ENCODE measurements at regions of chr20 and their contacts with region 1.

Region 1: GRCh38 chr20:34312544-34313217 is 9.5 kb upstream of the AHCY start:
- DNase-seq: peak; percentile 32 to 90
- H3K4me3 ChIP-seq: peak overlapping the region in 1 of 2 donors; percentile 43
- H3K27ac ChIP-seq: no peak overlapping the region
- H3K4me1 ChIP-seq: peaks cover 14 to 16% of the 10 kb centered on the region in 2 donors
- H3K27me3 ChIP-seq: no peaks in the 10 kb centered on the region
- CTCF ChIP-seq: peak; percentile 99 to 100 (median 99)

Region 2: GRCh38 chr20:34180460-34181120 is 132.1 kb before region 1 on chr20:
- intact Hi-C with region 1: no loop called
- DNase-seq: no peak
- H3K4me3 ChIP-seq: no peak overlapping the region
- H3K27ac ChIP-seq: no peak overlapping the region
- H3K4me1 ChIP-seq: no peaks in the 10 kb centered on the region
- H3K27me3 ChIP-seq: no peaks in the 10 kb centered on the region
- CTCF ChIP-seq: no peak

Region 3: GRCh38 chr20:34324541-34324940 is 11.9 kb after region 1 on chr20:
- intact Hi-C with region 1: no loop called
- DNase-seq: no peak
- H3K4me3 ChIP-seq: no peak overlapping the region
- H3K27ac ChIP-seq: no peak overlapping the region
- H3K4me1 ChIP-seq: no peaks in the 10 kb centered on the region
- H3K27me3 ChIP-seq: no peaks in the 10 kb centered on the region
- CTCF ChIP-seq: no peak

Region 4: GRCh38 chr20:34475979-34476736 is 163.5 kb after region 1 on chr20:
- intact Hi-C with region 1: loop called (anchors 1 kb)
- DNase-seq: peak in 1 of 2 donors; percentile 75
- H3K4me3 ChIP-seq: no peak overlapping the region
- H3K27ac ChIP-seq: peak overlapping the region in 1 of 2 donors; percentile 34
- H3K4me1 ChIP-seq: peaks cover 0 to 12% of the 10 kb centered on the region in 2 donors
- H3K27me3 ChIP-seq: no peaks in the 10 kb centered on the region
- CTCF ChIP-seq: peak; percentile 48 to 79 (median 62)

Region 5: DNA sequence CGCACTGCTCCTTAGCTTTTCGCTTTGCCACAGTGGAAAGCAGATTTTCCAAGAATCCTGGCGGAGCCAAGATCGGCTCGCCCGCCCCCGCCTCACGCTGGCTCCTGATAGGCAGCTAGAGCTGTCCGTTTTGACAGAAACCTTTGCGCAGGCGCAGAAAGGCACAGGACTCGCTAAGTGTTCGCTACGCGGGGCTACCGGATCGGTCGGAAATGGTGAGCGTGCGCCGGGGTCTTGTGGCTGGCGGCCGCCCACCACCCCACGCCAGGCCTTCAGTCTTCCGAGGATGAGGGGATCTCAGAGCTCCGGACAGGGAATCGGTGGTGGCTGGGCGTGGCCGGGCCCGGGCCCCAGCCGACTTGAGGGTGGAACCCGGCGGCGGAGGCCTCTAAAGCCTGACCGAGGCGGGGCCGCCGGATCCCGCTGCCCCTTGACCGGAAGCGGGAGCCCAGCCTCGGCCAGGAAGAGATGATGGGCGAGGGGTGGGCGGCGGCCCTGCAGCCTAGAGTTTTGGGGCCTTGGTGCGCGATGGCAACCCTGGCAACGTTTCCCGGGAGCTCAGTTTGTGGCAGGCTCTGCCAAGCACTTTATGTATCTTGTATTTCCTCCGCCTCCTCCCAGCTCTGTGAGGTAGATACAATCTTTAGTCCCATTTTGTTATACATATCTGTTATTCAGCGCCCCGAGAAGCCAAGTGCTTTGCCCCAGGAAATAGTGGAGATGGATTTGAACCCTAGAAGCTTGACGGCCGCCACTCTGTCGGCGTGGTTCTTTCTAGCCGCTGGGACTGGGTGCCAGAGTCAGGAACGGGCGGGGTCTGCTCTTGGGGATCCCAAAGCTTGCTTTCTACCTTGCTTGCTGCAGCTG is 203.8 kb after region 1 on chr20 and contains the start of gene DYNLRB1:
- intact Hi-C with region 1: loop called (anchors 5 kb)
- DNase-seq: peak; percentile 82 to 98
- H3K4me3 ChIP-seq: peak within 1 kb of the TSS; percentile 78 to 80
- H3K27ac ChIP-seq: peak within 1 kb of the TSS; percentile 89 to 97
- H3K4me1 ChIP-seq: peaks cover 0 to 27% of the 10 kb centered on the region in 2 donors
- H3K27me3 ChIP-seq: no peaks in the 10 kb centered on the region
- CTCF ChIP-seq: no peak
- total RNA-seq, gene DYNLRB1: 148 TPM

Region 6: DNA sequence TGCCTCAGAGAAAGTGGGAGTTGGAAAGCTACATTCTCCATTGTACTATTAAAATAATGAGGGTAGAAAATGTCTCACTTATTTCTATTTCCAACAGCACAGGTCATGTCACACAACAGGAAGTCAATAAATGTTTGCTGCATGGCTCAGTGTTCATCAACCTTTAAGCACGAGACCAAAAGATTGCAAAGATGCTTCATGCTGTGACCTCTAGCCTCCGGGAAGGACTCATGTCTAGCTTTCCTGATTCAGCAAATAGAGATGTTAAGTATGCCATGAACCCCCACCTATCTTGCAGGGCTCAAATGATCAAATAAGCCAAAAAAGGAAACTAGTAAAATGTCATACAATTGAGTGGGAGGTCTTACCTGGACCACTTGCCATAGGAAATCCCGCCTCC is 455.4 kb after region 1 on chr20:
- intact Hi-C with region 1: loop called (anchors 10 kb)
- DNase-seq: no peak
- H3K4me3 ChIP-seq: no peak overlapping the region
- H3K27ac ChIP-seq: no peak overlapping the region
- H3K4me1 ChIP-seq: no peaks in the 10 kb centered on the region
- H3K27me3 ChIP-seq: no peaks in the 10 kb centered on the region
- CTCF ChIP-seq: no peak

Region 7: GRCh38 chr20:34850969-34851368 is 538.3 kb after region 1 on chr20:
- intact Hi-C with region 1: no loop called
- DNase-seq: no peak
- H3K4me3 ChIP-seq: no peak overlapping the region
- H3K27ac ChIP-seq: no peak overlapping the region
- H3K4me1 ChIP-seq: no peaks in the 10 kb centered on the region
- H3K27me3 ChIP-seq: no peaks in the 10 kb centered on the region
- CTCF ChIP-seq: no peak